ENCODE measurements at regions of chrX and their contacts with region 1.

Region 1: GRCh38 chrX:4547213-4547836 is 833.9 kb upstream of the PRKX start:
- DNase-seq: peak; percentile 23
- H3K4me3 ChIP-seq: no peak overlapping the region
- H3K27ac ChIP-seq: no peak overlapping the region
- H3K4me1 ChIP-seq: no peaks in the 10 kb centered on the region
- H3K27me3 ChIP-seq: no peaks in the 10 kb centered on the region
- CTCF ChIP-seq: peak; percentile 90 to 96

Region 2: DNA sequence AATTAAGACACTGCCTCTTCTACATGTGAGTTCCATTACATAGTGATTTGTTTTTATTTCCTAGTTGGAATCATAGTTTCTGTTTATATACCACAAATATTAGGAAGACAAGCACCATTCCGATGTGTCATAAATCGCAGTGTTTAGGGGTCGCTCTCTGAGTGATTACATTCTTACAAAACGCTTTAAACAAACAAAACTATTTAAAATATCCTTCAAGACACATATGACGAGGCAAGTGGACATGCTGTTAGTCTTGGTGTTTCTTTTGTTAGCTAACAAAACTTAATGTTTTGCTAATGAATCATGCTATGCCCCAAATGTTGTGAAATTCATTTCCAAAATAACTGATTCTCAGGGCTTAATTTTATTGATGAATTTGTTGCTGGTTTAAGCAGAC is 385.5 kb after region 1 on chrX:
- CTCF ChIA-PET with region 1: no interaction called
- dilution Hi-C with region 1: no loop called
- in situ Hi-C with region 1: no loop called
- intact Hi-C with region 1: no loop called
- DNase-seq: peak; percentile 8
- H3K4me3 ChIP-seq: no peak overlapping the region
- H3K27ac ChIP-seq: no peak overlapping the region
- H3K4me1 ChIP-seq: no peaks in the 10 kb centered on the region
- H3K27me3 ChIP-seq: no peaks in the 10 kb centered on the region
- CTCF ChIP-seq: no peak

Region 3: GRCh38 chrX:5068550-5068949 is 521.2 kb after region 1 on chrX:
- CTCF ChIA-PET with region 1: no interaction called
- dilution Hi-C with region 1: no loop called
- in situ Hi-C with region 1: no loop called
- intact Hi-C with region 1: no loop called
- DNase-seq: peak; percentile 19
- H3K4me3 ChIP-seq: no peak overlapping the region
- H3K27ac ChIP-seq: no peak overlapping the region
- H3K4me1 ChIP-seq: no peaks in the 10 kb centered on the region
- H3K27me3 ChIP-seq: no peaks in the 10 kb centered on the region
- CTCF ChIP-seq: no peak

Region 4: DNA sequence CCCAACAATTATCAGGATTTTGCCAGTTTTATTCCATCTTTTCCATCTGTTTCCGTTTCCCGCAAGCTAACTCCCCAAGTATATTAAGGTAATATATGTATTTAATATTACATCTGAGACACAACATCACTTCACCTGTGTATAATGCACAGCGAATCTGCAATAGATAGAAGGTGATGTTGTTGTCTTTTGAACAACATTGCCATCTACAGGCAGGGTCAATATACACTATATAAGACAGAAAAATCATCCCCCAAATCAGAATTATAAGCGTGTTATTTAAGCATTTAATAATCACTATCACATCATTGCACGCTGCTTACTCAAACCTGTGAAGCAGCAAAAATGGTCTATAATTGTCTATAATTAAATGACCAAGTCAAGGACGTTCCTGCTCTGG is 565.8 kb after region 1 on chrX:
- CTCF ChIA-PET with region 1: no interaction called
- dilution Hi-C with region 1: no loop called
- in situ Hi-C with region 1: no loop called
- intact Hi-C with region 1: loop called (anchors 2 kb)
- DNase-seq: peak; percentile 4
- H3K4me3 ChIP-seq: no peak overlapping the region
- H3K27ac ChIP-seq: no peak overlapping the region
- H3K4me1 ChIP-seq: no peaks in the 10 kb centered on the region
- H3K27me3 ChIP-seq: no peaks in the 10 kb centered on the region
- CTCF ChIP-seq: peak; percentile 28 to 49

Region 5: DNA sequence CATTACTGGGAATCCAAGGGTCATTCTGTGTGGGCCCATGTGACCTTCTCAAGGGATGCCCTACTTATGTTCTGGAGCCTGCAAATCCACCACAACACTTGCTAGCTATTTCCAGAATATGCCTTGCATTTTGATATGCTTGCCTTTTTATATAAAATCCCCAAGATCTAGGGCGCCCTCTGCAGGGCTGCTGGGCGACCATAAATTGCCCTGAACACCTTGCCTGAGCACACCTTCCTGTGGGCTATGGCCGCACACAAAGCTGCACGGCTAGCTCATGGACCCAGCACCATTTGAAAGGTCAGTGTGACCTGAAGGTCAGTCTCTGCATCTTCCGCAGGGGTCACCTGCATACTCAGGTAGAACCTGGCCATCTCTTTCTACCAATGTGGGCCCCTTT is 1369.6 kb after region 1 on chrX:
- CTCF ChIA-PET with region 1: no interaction called
- dilution Hi-C with region 1: no loop called
- in situ Hi-C with region 1: no loop called
- intact Hi-C with region 1: loop called (anchors 5 kb)
- DNase-seq: no peak
- H3K4me3 ChIP-seq: no peak overlapping the region
- H3K27ac ChIP-seq: no peak overlapping the region
- H3K4me1 ChIP-seq: no peaks in the 10 kb centered on the region
- H3K27me3 ChIP-seq: no peaks in the 10 kb centered on the region
- CTCF ChIP-seq: peak; percentile 19 to 43

Measured in mammary epithelial cell (primary cell).